Left cardiac atrium (tissue), 4 donors: ENCODE measurements at regions of chr4 and their contacts with region 1.

Region 1: DNA sequence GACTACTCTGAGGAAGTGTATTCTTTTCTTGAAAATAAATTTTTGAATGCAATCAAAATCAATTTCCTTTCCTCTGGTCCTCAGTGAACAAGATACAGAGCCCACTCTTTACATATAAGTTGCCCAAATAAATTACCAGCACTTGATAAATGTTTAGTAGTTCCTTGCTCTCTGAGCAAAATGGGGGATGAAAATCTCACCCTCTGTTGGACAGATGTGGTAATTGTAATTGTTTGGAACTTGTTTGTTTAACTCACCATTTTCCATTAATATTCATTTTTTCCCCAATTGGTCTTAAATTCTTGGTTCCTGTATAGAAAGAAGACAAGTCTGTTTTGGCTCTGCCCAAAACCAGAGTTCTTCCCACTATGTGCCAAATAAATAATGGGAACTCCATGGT is 146.3 kb downstream of the LDB2 start:
- DNase-seq: no peak
- ATAC-seq: no peak

Region 2: DNA sequence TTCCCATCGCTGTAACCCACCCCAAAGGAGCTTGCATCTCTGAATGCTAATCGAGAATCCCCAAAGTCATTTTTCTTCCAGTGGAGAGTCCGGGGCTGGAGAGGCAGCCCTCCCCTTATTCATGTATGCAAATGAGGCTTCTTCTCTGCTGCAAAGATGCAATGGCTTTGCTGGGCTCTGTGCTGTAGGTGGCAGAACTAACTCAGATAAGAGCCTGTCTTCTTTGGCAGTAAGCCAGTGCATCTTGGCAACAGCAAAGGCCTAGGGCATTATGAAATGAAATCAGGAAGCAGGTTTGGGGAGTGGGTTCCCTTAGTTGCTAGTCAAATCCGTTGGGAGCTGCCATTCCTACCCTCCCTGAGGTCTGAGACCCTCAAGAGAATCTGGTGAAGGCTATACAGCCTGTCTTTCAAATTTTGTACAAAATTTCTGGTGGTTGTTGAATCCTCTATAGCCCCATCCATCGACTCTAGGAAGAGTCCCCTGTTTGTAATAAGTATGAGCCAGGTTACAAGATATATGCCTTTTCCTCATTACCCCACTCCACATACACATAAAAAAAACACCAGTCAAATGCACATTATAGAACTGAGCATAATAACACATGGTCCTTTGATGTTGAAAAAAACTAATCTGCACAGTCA is 235.2 kb before region 1 on chr4:
- intact Hi-C with region 1: loop called in 1 of 2 experiments (anchors 10 kb)
- DNase-seq: peak; percentile 57
- ATAC-seq: peak; percentile 77 to 79